ENCODE measurements at regions of chr6 and their contacts with region 1.

Region 1: DNA sequence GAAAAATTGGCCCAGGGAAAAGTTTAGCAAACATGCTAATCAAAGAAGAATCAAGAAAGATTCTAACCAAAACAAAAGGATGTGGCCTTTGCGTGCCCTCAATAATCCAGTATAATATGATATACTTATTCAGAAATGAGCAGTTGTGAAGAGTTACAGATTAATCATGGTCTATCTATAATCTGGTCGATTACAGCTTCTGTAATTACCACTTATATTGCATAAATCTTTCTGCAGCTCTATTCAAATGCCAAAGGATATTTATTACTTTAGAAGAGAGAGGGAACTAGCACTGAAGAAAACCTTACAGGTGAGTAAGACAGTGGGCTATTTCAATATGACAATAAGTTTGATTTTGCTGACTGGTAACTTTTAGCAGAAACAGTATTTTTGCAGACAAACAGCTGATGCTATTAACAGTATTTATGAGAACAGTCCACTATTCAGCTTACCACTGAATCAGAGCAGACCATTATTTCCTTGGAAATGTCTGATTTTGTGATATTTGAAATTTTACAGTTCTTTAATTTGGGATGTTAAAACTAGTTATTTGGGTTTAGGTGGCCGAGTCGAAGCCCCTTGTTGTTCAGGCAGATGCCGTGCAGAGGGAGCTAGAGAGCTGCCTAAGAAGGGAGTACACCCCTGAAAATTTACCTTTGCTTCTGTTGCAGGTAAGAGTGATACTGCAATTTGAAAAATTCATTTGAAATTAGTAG is 92.2 kb downstream of the CEP57L1 start:
- DNase-seq: peak; percentile 58
- ATAC-seq: peak; percentile 84
- H3K4me3 ChIP-seq: no peak overlapping the region
- H3K27ac ChIP-seq: no peak overlapping the region
- H3K4me1 ChIP-seq: peaks cover 3% of the 10 kb centered on the region; the same call in 1 of the 2 replicates
- H3K27me3 ChIP-seq: peaks cover 43% of the 10 kb centered on the region
- CTCF ChIP-seq: peak; percentile 98

Region 2: DNA sequence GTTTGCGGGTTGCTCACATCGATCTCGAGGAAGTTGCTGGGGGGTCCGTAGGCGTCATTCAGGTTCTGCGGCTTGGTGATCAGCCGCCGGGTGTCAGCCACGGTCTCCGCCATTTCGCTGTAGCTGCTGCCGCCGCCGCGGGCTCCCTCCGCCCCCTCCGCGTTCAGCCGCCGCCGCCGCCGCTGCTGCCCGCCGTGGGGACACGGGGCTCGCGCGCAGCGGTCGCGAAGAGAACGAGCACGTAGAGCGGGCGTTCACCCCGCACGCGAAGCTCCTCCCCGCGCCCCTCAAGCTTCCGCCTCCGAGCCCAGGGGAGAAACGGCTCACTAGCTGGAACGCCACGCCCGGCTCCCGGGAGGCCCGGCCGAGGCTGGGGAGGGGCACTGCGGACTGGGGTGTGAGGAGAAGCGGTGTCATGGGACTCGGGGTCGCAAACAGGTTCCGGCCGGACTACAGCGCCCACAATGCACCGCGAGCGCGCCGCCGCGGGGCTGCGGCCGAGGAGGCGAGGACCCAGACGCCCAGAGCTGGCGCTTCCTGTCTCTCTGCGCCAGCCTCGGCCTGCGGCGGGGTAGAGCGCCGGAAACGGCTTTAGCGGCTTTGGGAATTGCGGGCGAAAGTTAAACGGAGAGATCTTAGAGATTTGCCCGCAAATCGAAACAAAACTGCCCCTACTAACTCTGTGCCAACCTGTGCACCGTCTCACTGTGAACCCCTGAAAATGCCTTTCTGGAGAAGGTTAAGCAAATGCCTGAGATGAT is 926.6 kb before region 1 on chr6 and contains the start of gene SNX3:
- CTCF ChIA-PET with region 1: no interaction called
- POLR2A ChIA-PET with region 1: interaction called, 10 read pairs
- in situ Hi-C with region 1: no loop called
- intact Hi-C with region 1: no loop called
- DNase-seq: peak; percentile 90
- ATAC-seq: peak; percentile 99
- H3K4me3 ChIP-seq: peak within 1 kb of the TSS; percentile 88 to 99
- H3K27ac ChIP-seq: peak within 1 kb of the TSS; percentile 99
- H3K4me1 ChIP-seq: no peaks in the 10 kb centered on the region; the same call in 1 of the 2 replicates
- H3K27me3 ChIP-seq: no peaks in the 10 kb centered on the region
- CTCF ChIP-seq: no peak
- total RNA-seq, gene SNX3: 223 TPM

Region 3: GRCh38 chr6:109434456-109434855 is 246.9 kb after region 1 on chr6:
- CTCF ChIA-PET with region 1: no interaction called
- POLR2A ChIA-PET with region 1: no interaction called
- in situ Hi-C with region 1: no loop called
- intact Hi-C with region 1: loop called (anchors 10 kb)
- DNase-seq: no peak
- ATAC-seq: no peak
- H3K4me3 ChIP-seq: no peak overlapping the region
- H3K27ac ChIP-seq: no peak overlapping the region
- H3K4me1 ChIP-seq: peaks cover 6% of the 10 kb centered on the region; the same call in 1 of the 2 replicates
- H3K27me3 ChIP-seq: no peaks in the 10 kb centered on the region
- CTCF ChIP-seq: no peak

Region 4: GRCh38 chr6:110307368-110307767 is 1119.8 kb after region 1 on chr6:
- CTCF ChIA-PET with region 1: no interaction called
- POLR2A ChIA-PET with region 1: no interaction called
- in situ Hi-C with region 1: no loop called
- intact Hi-C with region 1: no loop called
- DNase-seq: no peak
- ATAC-seq: no peak
- H3K4me3 ChIP-seq: no peak overlapping the region
- H3K27ac ChIP-seq: no peak overlapping the region
- H3K4me1 ChIP-seq: no peaks in the 10 kb centered on the region
- H3K27me3 ChIP-seq: peaks cover 2% of the 10 kb centered on the region; the same call in 1 of the 2 replicates
- CTCF ChIP-seq: no peak

Measured in Panc1 (cell line).